ENCODE measurements at regions of chr6 and their contacts with region 1.

Region 1: GRCh38 chr6:142301651-142302370 is at the start of gene ADGRG6:
- H3K4me3 ChIP-seq: peak within 1 kb of the TSS; percentile 54
- H3K27ac ChIP-seq: peak within 1 kb of the TSS; percentile 79; the same call in 1 of the 2 replicates
- H3K4me1 ChIP-seq: peaks cover 11% of the 10 kb centered on the region
- CTCF ChIP-seq: peak; percentile 94

Region 2: DNA sequence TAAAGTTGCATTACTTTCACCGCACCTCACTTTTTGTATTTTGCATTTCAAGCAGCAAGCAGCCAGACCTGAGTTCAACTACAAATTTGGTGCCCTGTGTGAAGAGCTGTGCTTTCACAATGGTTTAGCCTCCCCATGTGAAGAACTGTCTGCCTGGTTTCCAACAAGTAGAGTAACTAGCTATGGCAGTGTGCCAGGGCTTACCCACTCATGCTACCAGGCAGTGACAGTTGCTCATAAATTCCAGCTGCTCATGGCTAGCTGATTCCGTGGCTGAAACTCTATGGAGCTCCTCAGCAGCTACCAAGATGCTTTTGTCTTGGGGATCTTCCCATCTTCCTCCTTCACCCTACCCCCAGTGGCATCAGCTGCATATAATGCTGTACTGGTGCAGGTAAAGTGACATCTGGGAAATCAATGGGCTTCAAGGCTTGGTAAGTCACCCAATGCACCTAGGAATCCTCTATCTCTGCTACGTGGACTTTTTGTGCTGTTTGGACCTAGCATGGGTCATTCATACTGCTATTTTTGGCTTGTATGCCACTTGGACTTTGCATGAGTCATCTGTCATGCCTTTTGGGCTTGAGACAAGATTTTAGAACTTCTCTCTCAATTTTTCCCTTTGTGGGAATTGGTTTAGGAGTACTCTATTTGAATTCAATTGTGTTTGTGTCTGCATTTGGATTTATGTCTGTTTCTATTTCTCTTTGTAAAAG is 345.6 kb before region 1 on chr6:
- CTCF ChIA-PET with region 1: no interaction called
- POLR2A ChIA-PET with region 1: no interaction called
- H3K4me3 ChIP-seq: no peak overlapping the region
- H3K27ac ChIP-seq: no peak overlapping the region
- H3K4me1 ChIP-seq: no peaks in the 10 kb centered on the region
- CTCF ChIP-seq: no peak

Region 3: DNA sequence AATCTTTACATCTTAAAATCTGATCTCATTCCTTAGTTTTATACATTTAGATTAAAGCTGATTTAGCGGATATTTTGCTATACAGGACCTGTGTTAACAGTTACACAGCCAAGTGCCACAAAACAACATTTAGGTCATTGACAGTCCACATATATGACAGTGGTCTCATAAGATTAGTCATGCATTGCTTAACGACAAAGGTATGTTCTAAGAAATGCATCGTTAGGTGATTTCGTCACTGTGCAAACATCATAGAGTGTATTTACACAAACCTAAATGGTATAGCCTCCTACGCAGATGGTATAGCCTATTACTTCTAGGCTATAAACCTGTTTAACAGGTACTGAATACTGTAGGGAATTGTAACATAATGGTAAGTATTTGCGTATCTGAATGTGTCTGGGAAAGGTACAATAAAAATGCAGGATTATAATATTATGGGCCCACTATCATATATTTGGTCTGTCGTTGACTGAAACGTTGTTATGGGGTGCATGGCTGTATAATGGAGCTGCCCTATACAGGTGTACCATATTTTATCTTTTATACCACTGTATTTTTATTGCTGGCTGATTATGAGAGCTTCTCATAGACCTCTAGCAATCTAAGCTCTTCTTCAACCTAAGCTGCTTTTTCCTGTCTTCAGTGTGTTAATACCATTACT is 21.7 kb after region 1 on chr6:
- CTCF ChIA-PET with region 1: interaction called, 6 read pairs
- POLR2A ChIA-PET with region 1: interaction called, 17 read pairs
- H3K4me3 ChIP-seq: no peak overlapping the region
- H3K27ac ChIP-seq: no peak overlapping the region
- H3K4me1 ChIP-seq: peaks cover 23% of the 10 kb centered on the region
- CTCF ChIP-seq: no peak

Measured in HEK293 (cell line).